ENCODE measurements at regions of chr7 and their contacts with region 1.

Region 1: GRCh38 chr7:56051339-56052191 is at the starts of genes CCT6A and PSPH:
- DNase-seq: peak; percentile 87
- H3K4me3 Mint-ChIP-seq: peak within 1 kb of the TSS; percentile 95
- H3K27ac Mint-ChIP-seq: peak within 1 kb of the TSS; percentile 93
- H3K4me1 Mint-ChIP-seq: peaks cover 36% of the 10 kb centered on the region
- H3K27me3 Mint-ChIP-seq: no peaks in the 10 kb centered on the region
- total RNA-seq, gene CCT6A: 259 and 263 TPM in 2 replicates
- total RNA-seq, gene PSPH: 18.4 and 20.8 TPM in 2 replicates

Region 2: DNA sequence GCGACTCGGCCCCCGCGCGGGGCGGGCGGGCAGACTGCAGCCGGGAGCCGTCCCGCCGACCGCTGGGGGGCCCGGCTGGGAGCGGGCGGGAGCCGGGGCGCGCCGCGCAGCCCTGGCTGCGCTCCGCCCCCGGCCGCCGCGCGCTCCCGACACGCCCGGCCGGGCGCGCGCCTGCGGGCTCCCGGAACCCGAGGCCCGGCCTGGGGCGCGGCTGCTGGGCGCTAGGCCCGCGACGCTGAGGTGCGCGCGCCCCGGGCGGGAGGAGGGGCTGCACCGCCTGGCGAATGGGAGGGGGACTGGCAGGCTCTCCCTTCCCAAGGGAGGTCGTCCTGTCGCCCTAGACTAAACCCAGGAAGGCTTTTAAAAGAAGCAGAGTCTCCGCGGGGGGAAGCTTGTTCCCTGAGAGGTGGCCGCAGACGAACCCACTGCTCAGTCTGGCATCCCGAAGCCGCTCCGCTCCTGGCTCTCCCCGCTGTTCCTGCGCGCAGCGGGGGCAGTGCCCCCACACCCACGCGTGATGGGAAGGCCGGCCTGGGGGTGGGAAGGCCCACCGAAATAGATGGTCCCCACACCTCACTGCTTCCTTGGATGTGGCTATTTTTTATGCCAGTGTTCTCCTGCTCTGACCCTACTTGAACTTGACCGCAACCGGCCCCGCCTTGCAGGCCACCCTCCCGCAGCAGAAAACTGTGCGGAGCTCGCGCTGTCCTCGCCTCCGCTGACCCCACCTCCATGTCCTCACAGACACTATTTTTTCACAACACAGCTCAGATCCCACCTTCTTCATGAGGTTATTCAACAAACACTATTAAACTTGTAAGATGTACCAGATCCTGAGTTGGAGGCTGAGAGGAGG is 479.0 kb before region 1 on chr7 and contains the start of gene VOPP1:
- intact Hi-C with region 1: loop called (anchors 5 kb)
- DNase-seq: peak; percentile 50
- H3K4me3 Mint-ChIP-seq: peak within 1 kb of the TSS; percentile 87
- H3K27ac Mint-ChIP-seq: peak within 1 kb of the TSS; percentile 90
- H3K4me1 Mint-ChIP-seq: peaks cover 51% of the 10 kb centered on the region
- H3K27me3 Mint-ChIP-seq: no peaks in the 10 kb centered on the region
- total RNA-seq, gene VOPP1: 53.7 and 56.0 TPM in 2 replicates

Region 3: DNA sequence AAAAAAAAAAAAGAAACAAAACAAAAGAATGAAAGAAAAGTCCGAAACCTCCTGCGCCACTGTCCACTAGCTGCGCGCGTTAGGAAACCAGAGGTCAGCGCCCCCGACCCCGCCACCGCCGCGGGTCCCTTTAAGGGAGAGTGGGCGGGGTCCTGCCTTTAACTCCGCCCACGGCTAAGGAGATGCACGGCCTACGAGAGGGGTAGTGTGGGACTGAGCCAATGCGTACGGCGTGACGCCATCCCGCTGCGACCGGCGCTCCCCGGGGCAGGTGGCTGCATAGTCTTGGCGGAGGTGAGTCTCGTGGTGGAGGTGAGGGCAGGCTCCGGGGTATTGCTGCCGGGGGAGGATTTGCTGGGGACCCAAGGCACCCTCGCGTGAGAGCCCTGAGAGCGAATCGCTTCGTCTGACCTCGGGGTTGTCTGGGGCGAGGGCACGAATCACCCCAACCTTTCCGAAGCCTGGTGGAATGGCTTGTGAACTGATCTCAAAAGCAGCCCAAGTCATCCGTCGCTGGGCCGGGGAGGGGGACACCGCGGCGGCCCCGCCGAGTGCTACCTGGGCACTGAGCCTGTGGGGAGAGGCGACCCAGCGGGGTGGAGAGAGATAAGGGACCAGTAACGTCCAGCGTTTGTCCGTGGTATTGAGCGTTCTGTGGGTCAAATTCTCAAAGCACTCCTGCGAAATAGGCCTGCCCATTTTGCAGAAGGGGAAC is 99.8 kb before region 1 on chr7 and contains the start of gene MRPS17:
- intact Hi-C with region 1: loop called (anchors 2 kb)
- DNase-seq: peak; percentile 89
- H3K4me3 Mint-ChIP-seq: peak within 1 kb of the TSS; percentile 90
- H3K27ac Mint-ChIP-seq: peak within 1 kb of the TSS; percentile 90
- H3K4me1 Mint-ChIP-seq: peaks cover 8% of the 10 kb centered on the region
- H3K27me3 Mint-ChIP-seq: no peaks in the 10 kb centered on the region
- total RNA-seq, gene MRPS17: 28.3 and 29.4 TPM in 2 replicates

Region 4: DNA sequence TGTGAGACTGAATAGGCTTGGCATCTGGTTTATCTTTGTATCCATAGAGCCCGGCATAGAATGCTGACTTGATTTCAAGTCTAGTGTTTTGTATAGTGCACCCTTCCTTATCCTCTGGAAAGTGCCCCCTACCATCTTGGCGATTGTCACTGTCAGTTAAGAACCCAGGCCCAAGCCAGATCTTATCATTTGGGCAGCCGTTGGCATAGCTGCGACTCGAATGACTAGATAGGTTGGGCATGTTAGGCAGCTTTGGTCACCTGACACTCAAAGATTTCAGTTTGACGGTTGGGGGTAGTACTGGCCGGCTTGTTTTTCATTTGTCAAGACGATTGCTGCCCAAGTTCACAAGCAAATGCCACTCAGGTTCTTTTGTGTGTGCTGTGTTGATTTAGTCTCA is 80.6 kb before region 1 on chr7:
- intact Hi-C with region 1: no loop called
- DNase-seq: no peak
- H3K4me3 Mint-ChIP-seq: no peak overlapping the region
- H3K27ac Mint-ChIP-seq: no peak overlapping the region
- H3K4me1 Mint-ChIP-seq: peaks cover 6% of the 10 kb centered on the region
- H3K27me3 Mint-ChIP-seq: no peaks in the 10 kb centered on the region

Region 5: GRCh38 chr7:56033671-56034432 is 17.7 kb before region 1 on chr7:
- intact Hi-C with region 1: loop called (anchors 1 kb)
- DNase-seq: peak; percentile 75
- H3K4me3 Mint-ChIP-seq: peak overlapping the region; percentile 88
- H3K27ac Mint-ChIP-seq: peak overlapping the region; percentile 75
- H3K4me1 Mint-ChIP-seq: peaks cover 12% of the 10 kb centered on the region
- H3K27me3 Mint-ChIP-seq: no peaks in the 10 kb centered on the region

Region 6: DNA sequence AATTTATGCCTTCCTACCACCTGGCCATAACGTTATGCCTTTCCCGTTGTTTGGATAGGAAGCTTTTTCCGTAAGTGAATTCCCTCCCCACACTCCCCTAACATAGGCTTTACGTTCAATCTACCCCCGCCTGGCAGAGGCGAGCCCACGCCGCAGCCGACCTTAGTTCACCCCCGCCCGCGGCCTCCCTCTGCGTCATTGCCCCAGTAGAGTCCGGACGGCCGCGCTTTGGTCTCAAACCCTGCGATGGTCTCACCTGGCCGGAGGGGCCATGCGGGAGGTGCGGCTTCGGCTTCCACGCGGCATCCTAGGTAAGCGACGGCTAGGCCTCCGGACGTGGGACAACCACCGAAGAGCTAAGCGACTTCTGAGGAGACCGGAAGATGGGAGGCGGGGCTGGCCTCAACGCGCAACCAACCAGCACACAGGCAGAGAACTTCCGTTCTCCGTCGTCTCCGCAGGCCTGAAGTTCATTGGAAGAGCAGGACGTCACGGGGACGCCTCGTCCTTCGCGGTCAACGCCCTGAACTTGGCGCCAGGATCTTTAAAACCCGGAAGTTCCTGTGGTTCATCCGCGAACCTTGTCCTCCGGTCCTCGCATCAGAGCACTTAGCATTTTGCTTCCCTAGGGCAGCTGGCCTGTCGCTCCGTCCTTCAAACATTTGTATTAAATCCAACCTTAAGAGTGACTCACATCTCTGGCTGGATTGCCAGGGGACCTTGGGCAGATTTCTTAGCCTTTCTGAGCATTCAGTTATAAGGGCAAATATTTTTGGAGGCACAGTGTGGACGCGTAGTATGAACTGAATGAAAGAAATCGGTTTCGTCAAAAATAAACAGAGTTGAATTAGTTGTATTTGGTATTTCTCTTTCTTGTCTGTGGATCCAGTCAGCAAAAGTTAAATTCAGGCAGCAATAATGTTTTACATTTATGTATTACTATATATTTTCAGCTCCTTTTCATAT is 54.8 kb after region 1 on chr7 and contains the start of gene CHCHD2:
- intact Hi-C with region 1: loop called (anchors 1 kb)
- DNase-seq: peak; percentile 93
- H3K4me3 Mint-ChIP-seq: peak within 1 kb of the TSS; percentile 99
- H3K27ac Mint-ChIP-seq: peak within 1 kb of the TSS; percentile 99
- H3K4me1 Mint-ChIP-seq: peaks cover 21% of the 10 kb centered on the region
- H3K27me3 Mint-ChIP-seq: no peaks in the 10 kb centered on the region
- total RNA-seq, gene CHCHD2: 660 TPM in 2 replicates